ENCODE measurements at regions of chr11 and their contacts with region 1.

Region 1: DNA sequence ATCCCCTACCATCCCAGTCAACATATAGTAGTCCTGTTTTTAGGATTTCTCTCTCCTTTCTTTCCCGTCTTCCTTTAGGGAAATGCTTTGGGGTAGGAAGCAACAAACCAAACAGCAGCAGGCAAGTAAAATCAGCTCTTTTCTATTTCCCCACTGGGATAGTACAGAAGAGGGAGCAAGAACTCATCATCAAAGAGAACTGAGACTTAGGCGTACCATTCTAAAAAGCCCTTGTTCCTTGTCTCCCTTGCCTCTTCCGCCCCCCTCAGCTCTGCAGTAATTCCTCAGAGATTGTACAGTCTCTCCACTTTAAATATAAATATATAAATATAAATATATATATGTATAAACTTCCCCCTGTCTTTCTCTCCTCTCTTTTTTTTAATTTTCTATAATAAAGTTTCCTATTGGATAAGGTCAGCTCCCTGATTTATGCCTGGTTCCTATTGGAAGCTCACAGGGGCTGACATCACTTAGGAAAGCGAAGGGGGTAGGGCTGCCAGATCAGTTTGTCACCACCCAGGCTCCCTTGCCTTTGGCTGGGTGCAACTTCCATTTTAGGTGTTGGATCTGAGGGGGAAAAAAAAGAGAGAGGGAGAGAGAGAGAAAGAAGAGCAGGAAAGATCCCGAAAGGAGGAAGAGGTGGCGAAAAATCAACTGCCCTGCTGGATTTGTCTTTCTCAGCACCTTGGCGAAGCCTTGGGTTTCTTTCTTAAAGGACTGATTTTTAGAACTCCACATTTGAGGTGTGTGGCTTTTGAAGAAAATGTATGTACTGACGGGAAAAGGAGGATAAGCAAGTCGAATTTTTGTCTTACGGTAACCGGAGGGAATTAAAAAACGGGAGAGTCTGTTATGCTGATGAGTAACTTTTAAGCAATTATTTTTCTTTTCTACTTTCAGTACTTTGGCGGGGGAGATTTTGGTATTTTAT is at the start of gene CTNND1:
- DNase-seq: peak; percentile 82 to 93 (median 91)
- ATAC-seq: peak; percentile 99
- H3K4me3 ChIP-seq: peak within 1 kb of the TSS; percentile 49 to 76 (median 66)
- H3K27ac ChIP-seq: peak within 1 kb of the TSS; percentile 84 to 97 (median 92)
- H3K4me1 ChIP-seq: peaks cover 0 to 39% (median 25%) of the 10 kb centered on the region in 12 donors
- H3K27me3 ChIP-seq: no peaks in the 10 kb centered on the region
- CTCF ChIP-seq: peak in 1 of 12 donors; percentile 18
- POLR2A ChIP-seq: peak in 1 of 2 donors; percentile 86
- total RNA-seq, gene CTNND1: 51.4 to 105 (median 60.8) TPM

Region 2: DNA sequence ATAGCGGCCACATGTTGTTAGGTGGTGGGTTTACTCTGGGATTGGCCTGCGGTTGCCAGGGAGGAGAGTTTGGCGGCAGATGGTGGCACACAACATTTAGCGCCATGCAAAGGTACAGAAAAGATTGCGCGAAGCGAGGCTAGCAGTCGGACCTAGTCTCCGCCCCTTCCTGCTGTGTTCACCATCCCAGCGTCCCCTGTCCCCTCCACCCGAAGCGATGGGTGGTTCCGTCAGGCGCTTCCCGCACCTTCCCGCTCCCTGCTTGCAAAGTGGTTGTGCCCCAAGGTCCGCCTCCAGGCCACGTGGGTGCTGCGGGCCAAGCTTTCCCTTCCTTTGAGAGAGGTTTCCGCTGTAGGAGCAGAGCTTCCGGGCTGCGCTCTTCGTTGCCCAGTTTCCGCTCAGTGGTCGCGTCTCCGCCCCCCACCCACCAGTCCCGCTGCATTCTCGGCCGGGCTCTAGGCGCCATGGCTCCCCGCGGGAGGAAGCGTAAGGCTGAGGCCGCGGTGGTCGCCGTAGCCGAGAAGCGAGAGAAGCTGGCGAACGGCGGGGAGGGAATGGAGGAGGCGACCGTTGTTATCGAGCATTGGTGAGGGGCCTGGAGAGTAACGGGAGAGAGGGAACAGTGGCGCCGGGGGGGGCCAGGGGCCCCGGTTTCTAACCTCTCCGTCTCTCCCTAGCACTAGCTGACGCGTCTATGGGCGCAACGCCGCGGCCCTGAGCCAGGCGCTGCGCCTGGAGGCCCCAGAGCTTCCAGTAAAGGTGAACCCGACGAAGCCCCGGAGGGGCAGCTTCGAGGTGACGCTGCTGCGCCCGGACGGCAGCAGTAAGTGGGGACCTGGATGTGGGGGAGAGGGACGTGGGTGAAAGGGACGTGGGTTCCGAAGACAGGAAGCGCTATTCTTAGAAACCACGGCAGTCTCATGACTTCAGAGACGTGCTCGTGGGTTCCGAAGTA is 20.2 kb before region 1 on chr11 and contains the start of gene SELENOH:
- intact Hi-C with region 1: loop called in 2 of 10 experiments (anchors 1 kb)
- DNase-seq: peak; percentile 95 to 98 (median 97)
- ATAC-seq: peak; percentile 96 to 98 (median 98)
- H3K4me3 ChIP-seq: peak within 1 kb of the TSS; percentile 78 to 99 (median 92)
- H3K27ac ChIP-seq: peak within 1 kb of the TSS; percentile 92 to 99 (median 96)
- H3K4me1 ChIP-seq: peaks cover 2 to 42% (median 14%) of the 10 kb centered on the region in 12 donors
- H3K27me3 ChIP-seq: no peaks in the 10 kb centered on the region
- CTCF ChIP-seq: peak in 1 of 12 donors; percentile 4
- POLR2A ChIP-seq: peak in 1 of 2 donors; percentile 73
- total RNA-seq, gene SELENOH: 56.8 to 134 (median 85.7) TPM

Region 3: DNA sequence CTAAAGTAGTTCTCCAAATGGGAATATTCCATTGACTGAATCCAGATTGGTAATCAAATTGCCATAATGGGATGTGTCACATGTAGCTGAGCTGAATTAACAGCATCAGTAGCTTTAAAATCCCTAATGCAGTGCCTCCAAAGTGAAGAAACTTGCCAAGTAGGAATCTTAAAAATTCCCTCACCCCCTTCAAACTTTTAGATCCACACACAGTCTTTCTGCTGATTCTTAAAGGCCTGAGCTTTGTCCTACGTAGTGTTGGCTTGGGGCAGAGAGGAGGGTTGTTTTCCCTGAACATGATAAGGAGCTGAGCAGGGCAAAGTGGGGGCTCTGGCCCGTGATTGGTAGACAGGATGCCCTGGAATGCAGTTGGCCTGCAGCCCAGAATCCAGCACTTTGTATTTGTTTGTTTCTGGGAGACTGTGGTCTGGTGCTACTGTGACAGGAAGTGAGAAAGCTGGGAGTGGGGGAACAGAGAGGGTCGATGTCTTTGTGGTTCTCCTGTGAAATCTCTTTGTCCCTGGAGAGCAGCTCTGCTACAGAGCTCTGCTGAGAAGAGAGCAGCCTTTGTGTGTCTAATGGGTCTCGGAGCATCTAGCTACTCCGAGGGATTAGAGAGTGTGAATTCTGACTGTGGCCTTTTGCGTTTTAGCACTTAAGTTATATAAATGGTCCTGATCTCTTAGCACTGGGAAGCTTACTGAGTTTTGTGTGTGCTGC is 16.9 kb after region 1 on chr11:
- intact Hi-C with region 1: loop called in 4 of 10 experiments (anchors 2 kb)
- DNase-seq: peak; percentile 91 to 97 (median 94)
- ATAC-seq: peak; percentile 90 to 94 (median 92)
- H3K4me3 ChIP-seq: peak overlapping the region in 11 of 12 donors; percentile 7 to 51 (median 23)
- H3K27ac ChIP-seq: peak overlapping the region; percentile 77 to 97 (median 91)
- H3K4me1 ChIP-seq: peaks cover 28 to 100% (median 96%) of the 10 kb centered on the region in 12 donors
- H3K27me3 ChIP-seq: no peaks in the 10 kb centered on the region
- CTCF ChIP-seq: no peak
- POLR2A ChIP-seq: peak in 1 of 2 donors; percentile 45

Measured in heart left ventricle (tissue), 16 donors.